H1 (cell line): ENCODE measurements at regions of chr2 and their contacts with region 1.

Region 1: GRCh38 chr2:209311948-209312347 is 111.9 kb upstream of the MAP2 start:
- DNase-seq: no peak
- H3K4me3 ChIP-seq: no peak overlapping the region
- H3K27ac ChIP-seq: no peak overlapping the region
- H3K4me1 ChIP-seq: peaks cover 0 to 7% (median 3%) of the 10 kb centered on the region in 4 experiments; a peak in 2 of 7 replicates
- H3K27me3 ChIP-seq: no peaks in the 10 kb centered on the region
- CTCF ChIP-seq: no peak
- EP300 ChIP-seq: no peak
- POLR2A ChIP-seq: peak in 1 of 2 experiments; percentile 62; a peak in 2 of 3 replicates
- RAD21 ChIP-seq: no peak

Region 2: GRCh38 chr2:209322041-209322440 is 10.1 kb after region 1 on chr2:
- CTCF ChIA-PET with region 1: interaction called, 3 read pairs
- POLR2A ChIA-PET with region 1: interaction called, 24 read pairs
- DNase-seq: no peak
- H3K4me3 ChIP-seq: no peak overlapping the region
- H3K27ac ChIP-seq: no peak overlapping the region
- H3K4me1 ChIP-seq: peaks cover 0 to 5% (median 3%) of the 10 kb centered on the region in 4 experiments; a peak in 5 of 7 replicates
- H3K27me3 ChIP-seq: no peaks in the 10 kb centered on the region
- CTCF ChIP-seq: no peak
- EP300 ChIP-seq: no peak
- POLR2A ChIP-seq: no peak
- RAD21 ChIP-seq: peak in 1 of 2 experiments; percentile 25; a peak in 2 of 4 replicates

Region 3: GRCh38 chr2:209423562-209424198 is 111.7 kb after region 1 on chr2 and contains the start of gene MAP2:
- CTCF ChIA-PET with region 1: no interaction called
- POLR2A ChIA-PET with region 1: no interaction called
- DNase-seq: peak; percentile 54 to 89
- H3K4me3 ChIP-seq: peak within 1 kb of the TSS; percentile 54 to 91 (median 67)
- H3K27ac ChIP-seq: no peak within 1 kb of the TSS
- H3K4me1 ChIP-seq: peaks cover 0 to 6% (median 1%) of the 10 kb centered on the region in 4 experiments; a peak in 4 of 7 replicates
- H3K27me3 ChIP-seq: no peaks in the 10 kb centered on the region; a peak in 2 of 7 replicates
- CTCF ChIP-seq: peak; percentile 85 to 100 (median 90)
- EP300 ChIP-seq: 0 out of 3 replicates have a peak, but pooled peaks of 1 of the 2 experiments have one; percentile 26
- POLR2A ChIP-seq: peak in 1 of 2 experiments; percentile 50; a peak in 1 of 3 replicates
- RAD21 ChIP-seq: peak; percentile 53 to 77
- total RNA-seq, gene MAP2: 4.6 and 5.9 TPM in 2 replicates